Activated naive CD4-positive, alpha-beta T cell treated with anti-CD3 and anti-CD28 coated beads, Interleukin-2, amount 10 ng/mL, durations not matched to agents 7 days and 5 days (primary cell): ENCODE measurements at regions of chr1 and their contacts with region 1.

Region 1: GRCh38 chr1:150256554-150257341 is 826 bp upstream of the CA14 start:
- DNase-seq: no peak
- H3K4me3 Mint-ChIP-seq: no peak overlapping the region
- H3K27ac Mint-ChIP-seq: no peak overlapping the region
- H3K4me1 Mint-ChIP-seq: peaks cover 21% of the 10 kb centered on the region
- H3K27me3 Mint-ChIP-seq: peaks cover 77% of the 10 kb centered on the region

Region 2: GRCh38 chr1:150268705-150269403 is 12.1 kb after region 1 on chr1 and contains the start of gene APH1A:
- CTCF ChIA-PET with region 1: interaction called, 12 read pairs
- DNase-seq: peak; percentile 97
- H3K4me3 Mint-ChIP-seq: peak within 1 kb of the TSS; percentile 86
- H3K27ac Mint-ChIP-seq: peak within 1 kb of the TSS; percentile 98
- H3K4me1 Mint-ChIP-seq: peaks cover 31% of the 10 kb centered on the region
- H3K27me3 Mint-ChIP-seq: peaks cover 4% of the 10 kb centered on the region

Region 3: DNA sequence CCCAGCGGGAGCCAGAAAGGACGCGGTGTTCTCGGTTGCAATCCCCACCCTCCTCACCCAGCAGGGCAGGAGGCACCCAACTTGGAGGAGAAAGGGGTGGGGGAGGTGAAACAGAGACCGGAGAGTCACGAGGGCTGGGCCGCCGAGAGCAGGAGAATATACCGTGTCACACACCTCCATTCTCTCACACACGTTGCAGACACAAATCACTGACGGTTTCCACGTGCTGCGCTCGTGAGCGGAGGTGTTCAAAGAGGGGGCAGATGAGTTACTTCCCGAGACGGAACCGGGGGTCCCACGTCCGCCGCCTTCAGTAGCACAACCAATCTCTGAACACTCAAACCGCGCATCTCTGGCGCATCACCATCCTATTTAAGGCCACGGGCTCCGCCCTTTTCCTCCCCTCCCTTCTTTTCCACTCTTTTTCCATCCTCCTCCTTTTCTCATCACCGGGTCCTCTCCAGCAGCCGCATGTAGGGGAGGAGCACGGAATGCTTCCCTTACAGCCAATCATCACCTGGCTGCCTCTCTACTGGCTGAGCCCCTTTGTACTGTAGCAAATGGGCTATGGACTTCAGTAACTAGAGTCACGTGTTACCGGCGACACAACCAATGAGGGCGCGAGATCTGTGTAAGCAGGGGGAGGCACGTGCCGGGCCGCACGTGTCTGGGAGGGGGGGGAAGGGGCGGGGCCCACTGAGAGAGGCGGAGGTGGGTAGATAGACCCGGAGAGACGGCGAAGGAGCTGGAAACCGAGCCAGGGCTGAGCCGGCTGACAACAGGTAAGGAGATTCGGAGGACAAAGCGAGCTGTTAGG is 25.3 kb after region 1 on chr1 and contains the start of gene CIART:
- CTCF ChIA-PET with region 1: interaction called, 49 read pairs
- DNase-seq: peak; percentile 89
- H3K4me3 Mint-ChIP-seq: peak within 1 kb of the TSS; percentile 77
- H3K27ac Mint-ChIP-seq: peak within 1 kb of the TSS; percentile 82
- H3K4me1 Mint-ChIP-seq: peaks cover 29% of the 10 kb centered on the region
- H3K27me3 Mint-ChIP-seq: peaks cover 31% of the 10 kb centered on the region